Motor neuron (in vitro differentiated cells): ENCODE measurements at regions of chr1 and their contacts with region 1.

Region 1: DNA sequence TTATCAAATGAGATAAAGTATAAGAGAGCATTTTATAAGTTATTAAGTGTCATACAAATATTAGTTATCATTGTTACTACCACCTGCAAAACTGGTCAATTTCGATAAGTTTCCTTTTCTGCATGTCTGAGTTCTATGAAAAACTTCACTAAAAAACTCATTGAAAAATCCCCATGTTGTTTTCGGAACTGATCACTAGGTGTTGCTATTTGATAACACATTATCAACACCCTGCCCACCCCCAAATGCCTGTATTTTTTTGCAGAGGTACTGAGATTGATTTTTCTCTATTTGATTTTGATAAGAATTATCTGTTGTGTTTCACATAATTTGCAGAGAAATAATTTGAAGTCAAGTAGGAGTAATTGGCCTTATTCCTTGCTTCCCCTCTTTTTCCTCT is 22.1 kb upstream of the DISP1 start:
- ATAC-seq: peak in 5 of 8 experiments; percentile 25 to 55 (median 37)
- H3K4me3 ChIP-seq: no peak overlapping the region
- H3K27ac ChIP-seq: no peak overlapping the region
- H3K4me1 ChIP-seq: no peaks in the 10 kb centered on the region

Region 2: DNA sequence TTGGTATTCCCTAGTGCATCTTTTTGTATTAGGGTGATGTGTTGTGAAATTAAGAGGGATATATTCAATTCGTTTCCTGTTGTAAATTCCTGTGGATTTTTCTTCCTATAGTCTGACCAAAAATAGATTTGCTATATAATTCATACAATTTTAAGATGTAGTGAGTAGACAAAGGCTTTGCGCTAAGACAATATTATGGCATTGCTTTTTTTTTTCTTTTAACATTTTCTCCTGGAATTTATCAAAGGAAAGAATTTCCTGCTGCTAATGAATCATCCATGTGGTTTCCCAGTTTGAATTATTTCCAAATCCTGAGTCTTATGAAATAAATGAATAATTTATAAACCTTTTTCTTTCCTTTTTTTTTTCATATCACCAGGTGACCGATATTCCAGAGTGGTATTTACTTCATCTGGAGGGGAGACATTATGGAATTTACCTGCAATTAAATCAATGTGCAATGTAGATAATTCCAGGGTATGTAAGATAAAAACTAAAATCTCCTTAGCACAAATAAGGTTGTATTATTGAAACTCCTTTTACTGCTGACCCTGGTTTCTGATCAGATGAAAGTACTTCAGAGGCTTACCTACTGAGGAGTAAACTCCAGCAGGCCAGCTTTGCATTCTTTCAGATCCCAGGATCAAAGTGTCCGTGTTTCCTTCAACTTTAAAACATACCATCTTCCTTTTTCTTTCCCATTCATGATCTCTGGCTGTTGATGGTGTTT is 201.9 kb after region 1 on chr1:
- in situ Hi-C with region 1: loop called in 1 of 9 experiments (anchors 10 kb)
- ATAC-seq: peak in 2 of 8 experiments; percentile 36 to 50
- H3K4me3 ChIP-seq: no peak overlapping the region
- H3K27ac ChIP-seq: no peak overlapping the region
- H3K4me1 ChIP-seq: no peaks in the 10 kb centered on the region

Region 3: GRCh38 chr1:223081181-223081994 is 288.6 kb after region 1 on chr1:
- in situ Hi-C with region 1: loop called in 7 of 9 experiments (anchors 10 to 25 kb)
- ATAC-seq: peak; percentile 94 to 99 (median 97)
- H3K4me3 ChIP-seq: peak overlapping the region in 2 of 5 donors; percentile 0 to 8
- H3K27ac ChIP-seq: no peak overlapping the region
- H3K4me1 ChIP-seq: no peaks in the 10 kb centered on the region

Region 4: DNA sequence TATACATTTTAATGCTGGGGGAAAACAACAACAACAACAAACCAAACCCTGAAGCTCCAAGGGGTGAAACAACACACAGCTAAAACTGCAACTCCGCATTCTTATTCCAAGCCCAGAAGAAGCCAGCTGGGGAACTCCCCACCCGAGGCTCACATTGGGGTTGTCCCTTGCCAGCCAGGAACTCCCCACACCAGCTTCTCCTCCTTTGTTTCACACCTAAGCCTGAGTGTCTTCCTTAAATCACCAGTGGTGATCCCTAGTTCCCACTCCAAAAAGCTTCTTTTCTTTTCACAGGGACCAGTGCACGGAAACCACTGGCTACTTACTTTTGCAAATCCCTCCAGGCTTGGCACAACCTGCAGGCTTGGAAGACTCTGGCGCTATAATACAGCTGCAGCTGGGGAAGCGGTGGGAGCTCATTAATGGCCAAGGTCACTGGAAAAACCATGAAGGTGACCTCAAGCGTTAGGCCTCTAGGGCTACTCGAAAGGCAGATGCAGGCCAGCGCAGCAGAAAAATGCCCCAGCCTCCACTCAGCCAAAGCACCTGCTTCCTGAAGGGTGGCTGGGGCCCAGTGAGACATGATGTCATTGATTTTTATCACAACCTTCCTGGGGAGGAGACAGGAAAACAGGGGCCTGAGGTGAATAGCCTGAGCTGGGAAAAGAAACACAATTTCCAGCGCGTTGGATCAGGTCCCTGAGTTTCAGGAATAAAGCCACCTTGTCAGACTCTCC is 310.2 kb after region 1 on chr1:
- in situ Hi-C with region 1: loop called in 5 of 9 experiments (anchors 25 kb)
- ATAC-seq: peak in 2 of 8 experiments; percentile 20 to 31
- H3K4me3 ChIP-seq: no peak overlapping the region
- H3K27ac ChIP-seq: no peak overlapping the region
- H3K4me1 ChIP-seq: peaks cover 0 to 4% of the 10 kb centered on the region in 2 donors